ENCODE measurements at regions of chr1 and their contacts with region 1.

Region 1: DNA sequence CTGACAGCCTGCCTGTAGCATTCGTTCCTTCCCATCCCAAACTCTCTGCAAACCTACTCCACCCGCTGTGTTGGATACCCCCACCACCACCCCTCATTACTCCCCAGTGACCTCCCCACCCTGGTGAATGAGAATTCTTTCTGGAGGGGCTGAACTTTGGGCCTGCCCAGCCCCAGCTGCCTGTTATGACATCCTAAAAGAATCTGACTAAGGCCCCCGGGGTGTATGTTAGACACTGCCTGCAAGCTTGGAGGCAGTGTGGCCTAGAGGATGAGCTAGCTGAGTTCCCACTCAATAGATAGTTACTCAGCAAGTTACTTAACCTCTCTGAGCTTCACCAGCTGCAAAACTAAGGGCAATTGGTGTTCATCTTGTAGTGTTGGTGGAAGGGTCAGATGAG is 110.2 kb upstream of the FGGY start:
- DNase-seq: peak; percentile 81 to 84
- H3K4me3 ChIP-seq: no peak overlapping the region
- H3K4me3 Mint-ChIP-seq: no peak overlapping the region
- H3K27ac Mint-ChIP-seq: peak overlapping the region; percentile 82
- H3K4me1 ChIP-seq: peaks cover 35% of the 10 kb centered on the region
- H3K4me1 Mint-ChIP-seq: peaks cover 19% of the 10 kb centered on the region
- H3K27me3 ChIP-seq: no peaks in the 10 kb centered on the region
- H3K27me3 Mint-ChIP-seq: no peaks in the 10 kb centered on the region
- CTCF ChIP-seq: no peak

Region 2: DNA sequence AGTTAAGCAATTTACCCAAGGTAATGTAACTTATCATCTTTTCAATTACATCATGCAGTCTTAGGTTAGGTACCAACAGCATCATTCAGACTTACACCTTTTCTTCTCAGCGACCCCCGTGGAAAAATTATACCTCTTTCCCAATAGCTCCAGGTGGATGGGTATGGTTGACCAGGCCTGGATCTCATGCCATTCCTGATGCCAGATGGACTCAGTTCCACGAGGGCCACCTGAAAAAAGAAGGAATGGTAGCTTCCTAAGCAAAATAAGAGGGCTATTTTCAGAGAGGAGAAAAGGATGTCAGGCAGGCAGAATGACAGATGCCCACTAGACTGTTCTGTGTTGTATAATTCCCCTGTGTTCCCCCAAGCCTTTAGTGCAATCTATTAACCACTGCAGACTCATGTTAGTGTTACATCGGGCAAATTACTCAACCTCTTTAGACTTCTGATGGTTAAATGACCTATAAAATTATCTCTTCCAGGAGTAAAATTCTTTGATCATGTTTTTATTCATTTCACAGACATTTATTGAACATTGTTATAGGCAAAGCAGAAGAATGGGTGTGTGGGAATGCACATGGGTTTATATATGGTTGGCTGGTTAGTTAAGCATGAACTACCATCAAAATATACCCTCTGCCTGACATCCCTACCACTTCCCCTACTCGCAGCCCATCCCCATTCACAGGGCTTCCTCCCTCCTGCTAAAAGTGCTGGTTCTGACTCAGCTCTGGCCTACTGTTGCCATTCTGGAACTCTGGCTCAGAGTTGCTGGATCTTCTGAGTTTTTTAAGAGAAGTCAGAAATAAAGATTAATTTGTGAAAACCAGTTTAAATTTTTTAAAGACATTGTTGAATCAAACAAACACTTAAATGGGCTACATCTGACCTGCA is 476.2 kb before region 1 on chr1:
- CTCF ChIA-PET with region 1: no interaction called
- POLR2A ChIA-PET with region 1: interaction called, 11 read pairs
- intact Hi-C with region 1: no loop called
- DNase-seq: no peak
- H3K4me3 ChIP-seq: no peak overlapping the region
- H3K4me3 Mint-ChIP-seq: no peak overlapping the region
- H3K27ac Mint-ChIP-seq: no peak overlapping the region
- H3K4me1 ChIP-seq: peaks cover 13% of the 10 kb centered on the region
- H3K4me1 Mint-ChIP-seq: peaks cover 22% of the 10 kb centered on the region
- H3K27me3 ChIP-seq: no peaks in the 10 kb centered on the region
- H3K27me3 Mint-ChIP-seq: no peaks in the 10 kb centered on the region
- CTCF ChIP-seq: no peak

Region 3: DNA sequence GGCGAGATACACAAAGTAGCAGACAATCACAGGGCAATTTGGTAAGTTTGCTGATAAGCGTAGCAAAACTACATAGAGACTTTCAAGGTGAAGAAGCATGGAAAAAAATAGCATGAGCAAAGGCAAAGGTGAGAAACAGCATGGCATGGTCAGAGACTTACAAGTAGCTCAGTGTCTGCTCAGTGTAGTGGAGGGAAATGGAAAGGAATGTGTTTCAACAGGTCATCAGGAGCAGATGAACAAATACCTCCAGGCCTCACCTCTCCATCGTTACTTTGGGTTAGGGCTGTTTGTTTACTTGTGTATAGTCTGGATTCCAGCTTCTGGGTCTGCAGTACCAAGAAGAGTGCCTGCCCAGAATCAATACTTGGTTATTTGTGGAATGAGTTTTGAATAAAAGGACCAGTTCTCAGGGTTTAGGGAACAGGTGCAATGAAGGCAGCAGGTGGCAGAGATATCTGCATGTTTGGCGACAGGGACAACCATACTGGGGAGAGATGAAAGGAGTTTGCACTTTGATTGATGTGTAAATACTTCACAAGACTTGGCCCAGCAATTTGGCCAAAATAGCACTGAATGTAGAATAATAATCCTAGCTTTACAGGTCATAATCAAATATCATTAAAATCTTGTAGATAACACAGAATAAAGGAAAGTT is 13.2 kb after region 1 on chr1:
- CTCF ChIA-PET with region 1: interaction called, 5 read pairs
- POLR2A ChIA-PET with region 1: no interaction called
- intact Hi-C with region 1: loop called (anchors 1 kb)
- DNase-seq: peak; percentile 46 to 56
- H3K4me3 ChIP-seq: no peak overlapping the region
- H3K4me3 Mint-ChIP-seq: no peak overlapping the region
- H3K27ac Mint-ChIP-seq: peak overlapping the region; percentile 71
- H3K4me1 ChIP-seq: peaks cover 13% of the 10 kb centered on the region; the same call in 1 of the 2 replicates
- H3K4me1 Mint-ChIP-seq: peaks cover 14% of the 10 kb centered on the region
- H3K27me3 ChIP-seq: no peaks in the 10 kb centered on the region
- H3K27me3 Mint-ChIP-seq: no peaks in the 10 kb centered on the region
- CTCF ChIP-seq: no peak

Region 4: DNA sequence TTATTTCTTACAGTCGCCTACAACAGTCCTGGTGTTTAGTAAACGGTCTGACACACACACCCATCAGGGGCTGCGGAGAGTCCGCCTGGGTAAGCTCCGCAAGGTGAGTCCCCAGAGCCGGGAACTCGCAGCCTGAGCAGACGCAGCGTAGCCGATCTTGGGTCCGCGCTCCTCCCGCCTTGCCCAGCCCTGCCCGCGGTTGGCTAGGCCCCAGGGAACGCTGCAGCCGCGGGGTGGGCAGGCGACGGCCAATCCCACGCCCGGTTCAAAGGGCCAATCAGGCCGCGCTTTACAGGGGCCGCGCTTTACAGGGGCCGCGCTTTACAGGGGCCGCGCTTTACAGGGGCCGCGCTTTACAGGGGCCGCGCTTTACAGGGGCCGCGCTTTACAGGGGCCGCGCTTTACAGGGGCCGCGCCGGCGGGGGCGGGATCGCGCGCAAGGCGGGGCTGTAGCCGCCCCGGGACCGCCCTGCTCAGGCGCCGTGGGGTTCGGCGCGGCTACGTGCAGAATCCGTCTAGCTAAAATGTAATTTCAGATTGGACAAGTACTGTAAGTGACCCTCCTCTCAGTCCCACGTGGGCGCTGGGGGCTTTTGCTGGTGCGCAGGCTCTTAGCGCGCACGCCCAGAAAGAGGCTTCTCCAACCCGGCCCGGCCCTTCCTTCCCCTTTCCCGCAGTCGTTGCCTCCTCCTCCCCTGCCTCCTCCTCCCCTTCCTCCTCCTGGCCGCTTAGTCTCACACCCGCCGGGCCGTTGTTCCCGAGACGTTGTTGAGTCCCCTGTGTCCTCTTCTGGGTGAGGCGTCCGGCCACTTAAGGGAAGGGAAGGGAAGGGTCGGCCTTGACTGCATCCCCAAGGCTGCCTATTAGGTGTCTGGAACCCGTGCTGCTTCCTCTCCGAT is 110.0 kb after region 1 on chr1 and contains the start of gene FGGY:
- CTCF ChIA-PET with region 1: no interaction called
- POLR2A ChIA-PET with region 1: no interaction called
- intact Hi-C with region 1: loop called (anchors 2 kb)
- DNase-seq: peak; percentile 89 to 94
- H3K4me3 ChIP-seq: peak within 1 kb of the TSS; percentile 39
- H3K4me3 Mint-ChIP-seq: peak within 1 kb of the TSS; percentile 83
- H3K27ac Mint-ChIP-seq: peak within 1 kb of the TSS; percentile 79
- H3K4me1 ChIP-seq: no peaks in the 10 kb centered on the region
- H3K4me1 Mint-ChIP-seq: peaks cover 15% of the 10 kb centered on the region
- H3K27me3 ChIP-seq: no peaks in the 10 kb centered on the region
- H3K27me3 Mint-ChIP-seq: no peaks in the 10 kb centered on the region
- CTCF ChIP-seq: no peak
- total RNA-seq, gene FGGY: 3.4 and 6.4 TPM in 2 replicates

Region 5: DNA sequence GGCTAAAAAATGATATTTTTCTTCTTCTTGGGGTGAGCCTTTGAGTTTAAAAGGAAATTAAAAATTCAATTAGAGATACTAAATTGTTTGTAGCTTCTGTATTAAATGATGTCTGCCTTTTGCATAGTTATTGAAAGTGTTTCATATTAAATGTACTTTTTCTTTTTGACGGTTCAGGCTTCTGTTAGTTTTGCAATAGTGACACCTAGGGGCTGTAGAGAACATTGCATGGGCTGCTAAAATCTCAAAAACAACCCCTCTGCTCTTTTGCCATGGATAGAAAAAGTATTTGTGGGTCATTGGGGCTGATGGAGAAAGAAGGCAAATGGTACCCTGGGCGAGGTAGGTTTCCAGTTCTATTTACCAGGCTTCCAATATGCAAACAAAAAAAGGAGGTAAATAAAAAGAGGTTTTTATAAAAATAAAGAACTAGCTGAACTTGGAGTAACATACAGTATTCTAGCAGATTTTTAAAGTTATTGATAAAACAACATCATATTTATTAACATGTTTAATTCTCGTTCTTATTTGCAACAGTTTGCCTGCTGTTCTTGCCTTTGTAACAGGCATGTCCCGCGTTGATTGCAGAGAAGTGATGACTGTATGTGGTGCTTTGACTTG is 512.7 kb after region 1 on chr1:
- CTCF ChIA-PET with region 1: no interaction called
- POLR2A ChIA-PET with region 1: no interaction called
- intact Hi-C with region 1: loop called (anchors 5 kb)
- DNase-seq: peak in 1 of 2 experiments; percentile 11
- H3K4me3 ChIP-seq: no peak overlapping the region
- H3K4me3 Mint-ChIP-seq: no peak overlapping the region
- H3K27ac Mint-ChIP-seq: no peak overlapping the region
- H3K4me1 ChIP-seq: no peaks in the 10 kb centered on the region
- H3K4me1 Mint-ChIP-seq: peaks cover 6% of the 10 kb centered on the region
- H3K27me3 ChIP-seq: no peaks in the 10 kb centered on the region
- H3K27me3 Mint-ChIP-seq: no peaks in the 10 kb centered on the region
- CTCF ChIP-seq: peak; percentile 59 to 72